ENCODE measurements at regions of chr3 and their contacts with region 1.

Region 1: DNA sequence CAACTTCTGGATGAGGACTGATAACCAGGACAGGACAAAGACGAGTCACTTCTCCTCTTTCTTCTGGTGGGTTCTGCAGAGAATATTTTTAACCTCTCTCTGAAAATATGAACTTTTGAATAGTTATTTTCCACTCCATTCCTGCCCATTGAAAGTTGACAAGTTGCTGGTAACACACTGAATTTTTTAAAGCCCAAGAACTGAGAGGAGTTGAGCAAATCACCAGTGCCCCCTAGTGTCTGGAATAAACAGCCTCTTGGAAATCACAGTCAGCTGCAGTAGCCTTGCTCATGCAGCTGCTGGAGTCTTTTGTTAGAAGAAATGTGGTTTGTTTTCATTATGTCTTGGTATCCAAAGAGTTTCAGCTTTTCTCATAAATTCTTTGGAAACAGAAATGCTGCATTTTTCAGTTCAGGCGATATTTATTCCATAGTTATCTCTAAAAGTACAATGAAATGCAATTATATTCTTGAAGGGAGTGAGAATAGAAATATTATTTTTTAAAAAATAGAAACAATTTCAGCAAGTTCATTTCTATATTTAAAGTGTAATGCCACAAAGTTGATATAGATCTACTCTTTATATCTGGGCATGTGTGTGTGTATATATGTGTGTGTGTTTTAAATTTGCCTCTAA is 741.0 kb upstream of the CBLB start:
- DNase-seq: peak in 40 of 42 donors; percentile 17 to 90 (median 68)

Region 2: GRCh38 chr3:105686278-105686897 is 923.4 kb before region 1 on chr3:
- intact Hi-C with region 1: loop called (anchors 10 kb)
- DNase-seq: no peak

Region 3: DNA sequence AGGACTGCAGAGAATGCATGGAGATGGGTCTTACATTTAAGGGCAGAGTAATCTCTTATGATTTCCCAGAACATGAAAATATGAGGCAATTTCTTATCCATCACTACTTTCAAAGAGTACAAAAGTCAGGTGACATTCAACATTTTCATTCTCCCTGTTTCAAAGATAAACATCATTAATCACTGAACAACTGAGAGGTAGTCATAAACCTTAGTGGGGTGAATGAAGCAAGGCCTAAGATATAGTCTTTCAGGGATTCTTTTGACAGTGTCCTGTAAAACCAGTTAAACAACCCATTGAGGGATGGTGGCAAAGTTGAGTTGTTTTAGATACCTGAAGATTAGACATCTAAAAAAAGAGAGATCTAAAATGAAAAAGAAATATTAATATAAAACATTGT is 469.4 kb before region 1 on chr3:
- intact Hi-C with region 1: no loop called
- DNase-seq: no peak

Region 4: DNA sequence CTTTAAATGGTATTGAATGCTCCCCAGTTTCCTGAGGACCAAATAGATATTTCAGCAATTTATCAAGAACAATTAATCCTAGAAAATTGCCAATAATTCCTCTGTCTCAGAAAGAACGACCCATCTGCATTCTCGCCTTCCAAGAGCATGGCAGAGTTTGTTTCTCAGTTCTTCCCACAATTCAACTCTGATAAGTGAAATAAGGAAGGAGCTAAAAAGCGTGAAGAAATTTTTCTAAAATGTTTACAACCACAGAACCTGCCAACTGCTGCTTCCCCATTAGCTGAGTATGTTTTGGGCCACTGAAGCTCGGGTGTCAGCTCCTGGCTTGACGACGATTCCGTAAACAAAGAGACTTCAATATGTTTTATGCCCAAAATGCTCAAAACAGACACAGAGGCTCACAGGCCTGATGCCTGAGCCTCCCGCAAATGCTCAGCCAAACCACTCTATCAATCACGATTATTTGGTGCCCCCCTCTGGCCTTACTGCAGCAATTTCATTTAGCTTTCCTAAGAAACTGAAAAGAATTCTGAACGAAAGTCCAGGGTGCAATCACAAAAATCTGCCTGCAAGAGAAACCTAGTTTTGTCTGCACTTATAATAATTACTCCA is 508.2 kb after region 1 on chr3:
- intact Hi-C with region 1: loop called (anchors 10 kb)
- DNase-seq: peak; percentile 24 to 90 (median 72)